GM23248 (cell line): ENCODE measurements at regions of chr2 and their contacts with region 1.

Region 1: DNA sequence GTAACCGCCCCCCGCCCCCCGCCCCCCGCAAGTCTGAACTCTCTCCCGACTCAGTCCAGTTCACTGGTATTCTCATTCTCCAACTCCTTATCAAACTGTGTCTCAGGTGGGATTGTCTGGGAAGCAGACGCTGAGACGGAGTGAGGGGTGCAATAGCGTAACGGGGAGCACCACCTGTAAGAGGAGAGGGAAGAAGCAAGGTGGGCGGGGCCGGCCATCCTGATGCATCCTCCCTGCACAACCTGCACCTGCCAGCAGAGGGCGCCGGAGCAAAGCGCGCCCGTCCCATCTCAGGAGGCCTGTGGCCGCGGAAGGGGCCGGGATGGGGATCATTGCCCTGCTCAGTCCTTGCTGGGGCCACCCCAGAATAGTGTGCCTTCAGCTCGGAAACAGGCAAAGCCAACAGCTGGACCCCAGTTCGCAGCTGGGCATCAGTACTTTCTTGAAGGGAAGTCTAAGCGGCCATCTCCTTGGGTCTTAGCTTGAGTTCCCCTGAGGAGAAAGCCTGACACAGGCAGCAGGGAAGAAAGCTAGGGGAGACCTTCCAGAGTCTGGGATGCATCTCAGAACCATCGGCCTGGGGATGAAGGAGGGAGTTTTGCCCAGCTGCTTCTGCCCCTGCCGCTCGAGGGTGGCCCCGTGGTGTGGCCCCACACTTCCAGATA is 208.0 kb downstream of the TFCP2L1 start:
- DNase-seq: peak; percentile 76
- H3K4me3 ChIP-seq: no peak overlapping the region
- H3K27ac ChIP-seq: no peak overlapping the region
- H3K4me1 ChIP-seq: peaks cover 5% of the 10 kb centered on the region; the same call in 1 of the 2 replicates
- H3K27me3 ChIP-seq: no peaks in the 10 kb centered on the region

Region 2: GRCh38 chr2:120343433-120344105 is 733.4 kb before region 1 on chr2:
- in situ Hi-C with region 1: loop called (anchors 25 kb)
- DNase-seq: peak; percentile 94
- H3K4me3 ChIP-seq: 0 out of 2 replicates have a peak overlapping the region, but pooled peaks have one; percentile 26
- H3K27ac ChIP-seq: no peak overlapping the region
- H3K4me1 ChIP-seq: no peaks in the 10 kb centered on the region
- H3K27me3 ChIP-seq: peaks cover 25% of the 10 kb centered on the region; the same call in 1 of the 2 replicates

Region 3: GRCh38 chr2:120693121-120693520 is 383.9 kb before region 1 on chr2:
- in situ Hi-C with region 1: loop called (anchors 5 kb)
- DNase-seq: peak; percentile 60
- H3K4me3 ChIP-seq: no peak overlapping the region
- H3K27ac ChIP-seq: no peak overlapping the region
- H3K4me1 ChIP-seq: peaks cover 8% of the 10 kb centered on the region
- H3K27me3 ChIP-seq: no peaks in the 10 kb centered on the region

Region 4: GRCh38 chr2:120907812-120908211 is 169.2 kb before region 1 on chr2:
- in situ Hi-C with region 1: no loop called
- DNase-seq: peak; percentile 6
- H3K4me3 ChIP-seq: no peak overlapping the region
- H3K27ac ChIP-seq: no peak overlapping the region
- H3K4me1 ChIP-seq: peaks cover 20% of the 10 kb centered on the region
- H3K27me3 ChIP-seq: no peaks in the 10 kb centered on the region

Region 5: GRCh38 chr2:121297217-121297830 is 220.3 kb after region 1 on chr2:
- in situ Hi-C with region 1: no loop called
- DNase-seq: peak; percentile 57
- H3K4me3 ChIP-seq: no peak overlapping the region
- H3K27ac ChIP-seq: no peak overlapping the region
- H3K4me1 ChIP-seq: no peaks in the 10 kb centered on the region
- H3K27me3 ChIP-seq: peaks cover 24% of the 10 kb centered on the region

Region 6: GRCh38 chr2:121699421-121700333 is 622.7 kb after region 1 on chr2:
- in situ Hi-C with region 1: loop called (anchors 25 kb)
- DNase-seq: peak; percentile 95
- H3K4me3 ChIP-seq: no peak overlapping the region
- H3K27ac ChIP-seq: no peak overlapping the region
- H3K4me1 ChIP-seq: peaks cover 4% of the 10 kb centered on the region
- H3K27me3 ChIP-seq: no peaks in the 10 kb centered on the region